A673 (cell line): ENCODE measurements at regions of chr20 and their contacts with region 1.

Region 1: DNA sequence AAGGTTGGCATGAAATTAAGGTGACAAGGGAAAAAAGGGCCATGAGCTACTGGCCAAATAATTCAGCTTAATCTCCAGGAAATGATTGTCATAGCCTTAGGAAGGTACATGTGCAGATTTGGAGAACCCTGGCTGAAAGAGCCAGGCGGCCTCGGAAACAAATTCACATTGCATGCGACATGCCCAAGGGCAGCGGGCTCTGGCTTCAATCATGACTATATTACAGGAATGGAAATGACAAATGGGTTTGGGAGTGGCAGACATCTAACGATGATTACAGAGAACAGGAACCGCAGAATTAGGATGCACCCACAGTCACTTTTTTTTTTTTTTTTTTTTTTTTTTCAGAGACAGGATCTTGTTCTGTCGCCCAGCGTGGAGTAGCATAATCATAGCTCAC is 112.4 kb upstream of the SALL4 start:
- DNase-seq: no peak
- H3K4me3 ChIP-seq: no peak overlapping the region
- H3K27ac ChIP-seq: no peak overlapping the region
- H3K4me1 ChIP-seq: peaks cover 19% of the 10 kb centered on the region
- H3K27me3 ChIP-seq: no peaks in the 10 kb centered on the region
- CTCF ChIP-seq: no peak

Region 2: GRCh38 chr20:51930775-51931174 is 16.0 kb after region 1 on chr20:
- CTCF ChIA-PET with region 1: interaction called, 11 read pairs
- POLR2A ChIA-PET with region 1: no interaction called
- intact Hi-C with region 1: no loop called
- DNase-seq: peak; percentile 92
- H3K4me3 ChIP-seq: no peak overlapping the region
- H3K27ac ChIP-seq: peak overlapping the region; percentile 1
- H3K4me1 ChIP-seq: peaks cover 51% of the 10 kb centered on the region
- H3K27me3 ChIP-seq: no peaks in the 10 kb centered on the region
- CTCF ChIP-seq: no peak

Region 3: DNA sequence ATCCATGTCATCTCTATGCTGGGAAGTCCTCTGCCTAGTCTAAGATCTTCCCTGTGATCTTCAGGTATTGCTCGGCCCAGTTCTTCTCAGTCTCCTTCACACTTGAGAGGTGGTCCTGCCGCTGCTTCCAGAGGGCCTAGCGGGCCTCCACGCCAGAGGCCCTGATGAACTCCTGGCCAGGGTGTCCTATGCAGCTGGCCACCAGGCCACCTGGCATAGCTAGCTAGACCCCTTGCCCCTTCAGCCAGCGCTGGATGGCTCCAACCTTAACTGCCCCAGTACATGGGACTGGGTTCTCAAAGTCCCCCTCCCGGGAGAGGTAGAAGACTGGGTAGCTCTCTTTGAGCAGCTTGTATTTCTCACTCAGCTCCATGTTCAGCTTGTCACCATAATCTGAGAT is 195.7 kb after region 1 on chr20:
- CTCF ChIA-PET with region 1: no interaction called
- POLR2A ChIA-PET with region 1: no interaction called
- intact Hi-C with region 1: no loop called
- DNase-seq: no peak
- H3K4me3 ChIP-seq: no peak overlapping the region
- H3K27ac ChIP-seq: no peak overlapping the region
- H3K4me1 ChIP-seq: no peaks in the 10 kb centered on the region
- H3K27me3 ChIP-seq: no peaks in the 10 kb centered on the region
- CTCF ChIP-seq: no peak